AG04450 (cell line): ENCODE measurements at regions of chr12 and their contacts with region 1.

Region 1: DNA sequence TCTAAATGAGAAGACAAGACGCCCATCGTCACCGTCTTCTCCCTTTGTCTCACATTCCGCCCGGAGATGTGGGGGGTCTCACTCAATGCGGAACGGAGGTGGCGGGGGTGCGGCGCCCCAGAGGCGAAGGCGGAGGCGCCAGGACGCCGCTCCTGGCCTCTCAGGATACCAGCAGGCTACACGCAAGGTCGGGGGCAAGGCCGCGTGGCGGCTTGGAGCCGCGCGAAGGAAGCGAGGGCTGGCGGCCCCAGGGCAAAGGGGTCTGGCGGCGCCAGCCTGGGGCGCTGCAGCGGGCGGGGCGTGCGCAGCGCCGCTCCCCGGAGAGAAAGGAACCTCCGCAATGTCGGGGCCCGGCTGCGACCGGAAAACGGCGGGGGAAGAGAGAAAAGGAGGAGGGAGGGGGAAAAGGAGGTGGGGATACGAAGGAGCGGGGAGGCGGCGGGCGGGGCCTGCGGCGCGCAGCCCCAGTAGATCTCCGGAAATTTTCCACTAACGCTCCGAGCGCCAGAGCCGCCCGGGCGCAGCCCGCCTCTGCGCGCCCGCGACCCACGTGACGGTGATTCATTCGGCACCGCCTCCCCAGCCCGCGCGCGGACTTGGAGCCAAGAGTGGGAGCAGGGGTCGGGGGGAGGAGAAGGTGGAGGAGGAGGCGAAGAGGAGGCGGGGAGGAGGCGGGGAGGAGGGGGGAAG is 10.5 kb upstream of the SLC38A2 start:
- DNase-seq: peak; percentile 94
- H3K4me3 ChIP-seq: peak overlapping the region; percentile 75
- H3K27ac ChIP-seq: peak overlapping the region; percentile 100
- H3K27me3 ChIP-seq: no peaks in the 10 kb centered on the region
- CTCF ChIP-seq: peak; percentile 18

Region 2: DNA sequence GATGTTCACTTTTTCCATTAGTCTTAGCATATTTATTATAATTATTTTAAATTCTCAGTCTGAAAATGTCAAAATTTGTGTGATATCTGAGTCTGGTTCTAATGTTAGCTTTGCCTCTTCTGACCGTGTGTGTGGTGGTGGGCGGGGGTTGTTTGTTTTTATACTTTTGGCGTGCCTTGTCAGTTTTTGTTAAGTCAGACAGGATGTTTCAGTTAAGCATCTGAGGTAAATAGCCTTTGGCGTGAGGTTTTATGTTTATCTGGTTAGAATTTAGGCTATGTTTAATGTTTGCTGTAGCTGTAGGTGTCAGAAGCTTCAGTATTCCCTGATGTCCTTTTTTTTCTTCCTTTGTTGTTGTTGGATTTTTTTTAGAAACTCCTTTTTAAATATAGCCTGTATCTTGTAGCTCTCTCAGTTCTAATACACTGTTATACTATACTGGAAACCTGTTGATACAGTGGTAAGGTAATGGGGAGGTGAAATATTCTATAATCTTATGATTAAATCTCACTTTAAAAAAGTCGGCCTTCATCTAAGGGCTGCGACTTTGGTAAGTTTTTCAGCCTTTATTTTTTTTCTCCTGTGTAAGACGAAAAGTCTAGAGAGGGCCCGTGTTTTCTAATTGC is 504.4 kb before region 1 on chr12:
- CTCF ChIA-PET with region 1: no interaction called
- POLR2A ChIA-PET with region 1: no interaction called
- DNase-seq: no peak
- H3K4me3 ChIP-seq: no peak overlapping the region
- H3K27ac ChIP-seq: no peak overlapping the region
- H3K27me3 ChIP-seq: no peaks in the 10 kb centered on the region
- CTCF ChIP-seq: no peak

Region 3: GRCh38 chr12:46332260-46332659 is 50.8 kb before region 1 on chr12:
- CTCF ChIA-PET with region 1: no interaction called
- POLR2A ChIA-PET with region 1: no interaction called
- DNase-seq: no peak
- H3K4me3 ChIP-seq: no peak overlapping the region
- H3K27ac ChIP-seq: no peak overlapping the region
- H3K27me3 ChIP-seq: no peaks in the 10 kb centered on the region
- CTCF ChIP-seq: no peak

Region 4: GRCh38 chr12:46372544-46373110 is 10.5 kb before region 1 on chr12 and contains the start of gene SLC38A2:
- CTCF ChIA-PET with region 1: no interaction called
- POLR2A ChIA-PET with region 1: interaction called, 31 read pairs
- DNase-seq: no peak
- H3K4me3 ChIP-seq: peak within 1 kb of the TSS; percentile 95
- H3K27ac ChIP-seq: peak within 1 kb of the TSS; percentile 98
- H3K27me3 ChIP-seq: no peaks in the 10 kb centered on the region
- CTCF ChIP-seq: no peak
- polyA plus RNA-seq, gene SLC38A2: 520 and 749 TPM in 2 replicates

Region 5: DNA sequence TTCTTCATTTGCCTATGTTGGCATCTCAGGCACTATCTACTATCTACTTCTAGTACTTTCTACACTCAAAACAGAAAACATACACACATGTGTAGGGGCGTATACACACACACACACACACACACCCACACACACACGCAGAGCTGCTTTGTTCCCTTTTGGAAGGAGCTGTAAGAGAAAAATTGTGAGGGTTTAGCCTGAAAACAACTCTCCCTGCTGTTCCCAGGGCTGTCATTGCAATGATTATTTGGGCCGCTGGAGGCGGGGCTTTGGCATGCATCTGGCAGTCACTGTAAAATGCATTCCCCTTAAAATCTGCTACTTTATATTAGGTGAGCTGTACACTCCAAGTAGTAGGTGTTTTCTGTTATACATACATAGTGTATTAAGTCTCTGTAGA is 18.6 kb after region 1 on chr12:
- CTCF ChIA-PET with region 1: no interaction called
- POLR2A ChIA-PET with region 1: interaction called, 24 read pairs
- DNase-seq: no peak
- H3K4me3 ChIP-seq: no peak overlapping the region
- H3K27ac ChIP-seq: no peak overlapping the region
- H3K27me3 ChIP-seq: no peaks in the 10 kb centered on the region
- CTCF ChIP-seq: peak; percentile 53

Region 6: GRCh38 chr12:46523863-46524770 is 141.0 kb after region 1 on chr12:
- CTCF ChIA-PET with region 1: no interaction called
- POLR2A ChIA-PET with region 1: interaction called, 16 read pairs
- DNase-seq: peak; percentile 92
- H3K4me3 ChIP-seq: peak overlapping the region; percentile 54
- H3K27ac ChIP-seq: peak overlapping the region; percentile 97
- H3K27me3 ChIP-seq: no peaks in the 10 kb centered on the region
- CTCF ChIP-seq: no peak